Dendritic cell treated with granulocyte-macrophage colony-stimulating factor and Interleukin-4, amounts not matched to agents 40 ng/mL and 50 ng/mL, for 4 days (primary cell): ENCODE measurements at regions of chr7 and their contacts with region 1.

Region 1: DNA sequence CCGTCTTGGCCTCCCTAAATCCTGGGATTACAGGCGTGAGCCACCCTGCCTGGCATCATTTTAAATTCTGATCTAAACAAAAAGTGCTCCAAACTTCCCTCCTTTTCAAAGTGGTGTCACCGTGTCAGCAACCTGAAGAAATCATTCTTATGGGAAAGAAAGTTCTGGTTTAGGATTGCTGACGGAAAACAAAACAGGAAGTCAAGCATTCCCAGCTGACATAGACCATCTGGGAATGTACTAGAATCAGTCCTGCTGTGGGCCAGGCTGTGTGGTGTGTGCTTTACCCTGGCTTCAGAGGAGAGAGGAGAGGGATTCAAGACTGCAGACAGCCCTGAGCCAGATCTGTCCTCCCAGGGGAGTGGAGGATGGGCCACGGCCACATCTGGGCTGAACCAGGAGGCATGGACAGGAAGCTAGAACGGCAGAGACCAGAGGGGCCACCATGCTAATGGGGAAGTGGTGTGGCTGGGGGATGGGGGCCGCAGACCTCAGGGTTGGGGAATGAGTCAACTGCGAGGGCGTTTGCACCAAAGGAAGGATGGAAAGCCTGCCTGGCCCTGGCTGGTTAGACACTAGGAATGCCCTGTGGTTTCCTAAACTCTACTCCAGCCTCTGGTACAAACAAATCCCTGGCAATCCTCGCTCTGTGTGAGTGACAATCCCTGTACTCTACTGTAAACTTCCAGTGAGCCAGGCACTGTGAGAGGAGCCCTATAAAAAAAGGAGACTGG is 16.7 kb upstream of the CLIP2 start:
- H3K4me3 Mint-ChIP-seq: peak overlapping the region; percentile 41
- H3K27ac Mint-ChIP-seq: peak overlapping the region; percentile 94
- H3K4me1 Mint-ChIP-seq: peaks cover 44% of the 10 kb centered on the region
- H3K27me3 Mint-ChIP-seq: peaks cover 5% of the 10 kb centered on the region

Region 2: GRCh38 chr7:74254129-74254857 is 18.2 kb before region 1 on chr7 and contains the start of gene RFC2:
- intact Hi-C with region 1: loop called (anchors 2 kb)
- H3K4me3 Mint-ChIP-seq: peak within 1 kb of the TSS; percentile 99
- H3K27ac Mint-ChIP-seq: peak within 1 kb of the TSS; percentile 98
- H3K4me1 Mint-ChIP-seq: peaks cover 46% of the 10 kb centered on the region
- H3K27me3 Mint-ChIP-seq: no peaks in the 10 kb centered on the region

Region 3: GRCh38 chr7:74289018-74289658 is 16.7 kb after region 1 on chr7 and contains the start of gene CLIP2:
- intact Hi-C with region 1: loop called (anchors 2 kb)
- H3K4me3 Mint-ChIP-seq: peak within 1 kb of the TSS; percentile 85
- H3K27ac Mint-ChIP-seq: peak within 1 kb of the TSS; percentile 66
- H3K4me1 Mint-ChIP-seq: peaks cover 64% of the 10 kb centered on the region
- H3K27me3 Mint-ChIP-seq: peaks cover 40% of the 10 kb centered on the region

Region 4: DNA sequence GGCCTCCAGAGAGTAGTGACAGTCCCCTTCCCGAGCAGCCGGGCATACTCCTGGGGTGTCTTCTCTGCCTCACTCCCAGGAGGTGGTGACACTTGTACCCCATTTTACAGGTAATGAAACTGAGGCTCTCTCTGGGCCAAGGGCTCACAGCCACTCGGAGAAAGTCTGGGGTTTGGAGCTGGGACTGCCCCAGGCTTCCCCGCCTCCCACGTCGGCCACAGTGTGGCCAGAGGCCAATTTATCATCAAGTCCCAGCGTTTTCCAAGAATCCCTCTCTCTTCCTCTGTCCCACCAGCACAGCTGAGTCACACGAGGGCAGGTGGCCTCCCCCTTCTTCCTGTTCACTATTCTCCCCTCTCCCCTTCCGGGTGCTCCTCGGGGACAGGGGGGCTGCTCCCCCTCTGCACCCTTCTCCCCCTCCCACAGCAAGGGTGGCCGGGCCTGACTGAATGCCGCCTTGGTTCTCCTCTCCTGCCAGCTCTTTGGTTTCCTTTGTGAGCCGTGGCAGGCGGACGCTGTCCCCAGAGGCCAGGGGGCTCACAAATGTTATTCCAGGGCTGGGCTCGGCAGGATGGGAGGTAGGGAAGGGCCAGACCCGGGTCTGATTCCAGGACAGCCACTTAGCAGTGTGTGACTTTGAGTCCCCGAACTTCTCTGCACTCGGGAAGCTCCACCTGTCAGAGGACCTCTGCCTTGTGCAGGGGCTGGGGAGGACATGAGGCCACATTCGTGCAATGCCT is 34.4 kb after region 1 on chr7:
- intact Hi-C with region 1: no loop called
- H3K4me3 Mint-ChIP-seq: peak overlapping the region; percentile 33
- H3K27ac Mint-ChIP-seq: peak overlapping the region; percentile 57
- H3K4me1 Mint-ChIP-seq: peaks cover 51% of the 10 kb centered on the region
- H3K27me3 Mint-ChIP-seq: peaks cover 41% of the 10 kb centered on the region